ENCODE measurements at regions of chr9 and their contacts with region 1.

Region 1: GRCh38 chr9:227860-228259 is 13.2 kb downstream of the DOCK8 start:
- DNase-seq: no peak
- ATAC-seq: no peak
- H3K4me3 Mint-ChIP-seq: no peak overlapping the region
- H3K27ac Mint-ChIP-seq: no peak overlapping the region
- H3K4me1 Mint-ChIP-seq: peaks cover 2% of the 10 kb centered on the region
- H3K27me3 Mint-ChIP-seq: no peaks in the 10 kb centered on the region

Region 2: DNA sequence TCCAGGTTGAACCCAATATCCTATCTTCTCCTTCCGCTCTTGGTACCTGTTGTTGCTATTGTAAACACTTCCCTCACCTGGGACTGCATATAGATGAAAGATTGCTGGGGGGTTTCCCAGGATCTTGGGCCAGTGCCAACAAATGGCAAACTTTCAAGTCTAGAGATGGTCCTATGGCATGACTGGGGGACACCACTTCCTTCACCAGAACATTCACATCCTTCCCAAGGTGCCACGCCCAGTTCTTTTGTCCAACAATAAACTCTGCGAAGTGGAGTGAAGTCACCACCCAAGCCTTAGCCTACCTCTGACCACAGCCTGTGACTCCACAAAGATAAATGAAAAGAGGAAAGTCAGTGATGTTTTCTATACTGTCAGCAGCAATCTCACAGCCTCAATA is 21.2 kb after region 1 on chr9:
- CTCF ChIA-PET with region 1: no interaction called
- POLR2A ChIA-PET with region 1: no interaction called
- intact Hi-C with region 1: loop called in 1 of 2 experiments (anchors 2 kb)
- DNase-seq: peak; percentile 8
- ATAC-seq: peak; percentile 45
- H3K4me3 Mint-ChIP-seq: no peak overlapping the region
- H3K27ac Mint-ChIP-seq: peak overlapping the region; percentile 30
- H3K4me1 Mint-ChIP-seq: peaks cover 11% of the 10 kb centered on the region
- H3K27me3 Mint-ChIP-seq: no peaks in the 10 kb centered on the region

Region 3: GRCh38 chr9:347667-348292 is 119.9 kb after region 1 on chr9:
- CTCF ChIA-PET with region 1: no interaction called
- POLR2A ChIA-PET with region 1: no interaction called
- intact Hi-C with region 1: no loop called
- DNase-seq: no peak
- ATAC-seq: no peak
- H3K4me3 Mint-ChIP-seq: no peak overlapping the region
- H3K27ac Mint-ChIP-seq: peak overlapping the region; percentile 2
- H3K4me1 Mint-ChIP-seq: peaks cover 19% of the 10 kb centered on the region
- H3K27me3 Mint-ChIP-seq: no peaks in the 10 kb centered on the region

Region 4: GRCh38 chr9:426264-426663 is 198.4 kb after region 1 on chr9:
- CTCF ChIA-PET with region 1: no interaction called
- POLR2A ChIA-PET with region 1: no interaction called
- intact Hi-C with region 1: no loop called
- DNase-seq: peak; percentile 49
- ATAC-seq: peak; percentile 94
- H3K4me3 Mint-ChIP-seq: no peak overlapping the region
- H3K27ac Mint-ChIP-seq: no peak overlapping the region
- H3K4me1 Mint-ChIP-seq: no peaks in the 10 kb centered on the region
- H3K27me3 Mint-ChIP-seq: no peaks in the 10 kb centered on the region